ENCODE measurements at regions of chr10 and their contacts with region 1.

Region 1: GRCh38 chr10:74151056-74151878 is at the start of gene ADK:
- DNase-seq: peak; percentile 99
- ATAC-seq: peak; percentile 96
- H3K4me3 Mint-ChIP-seq: no peak within 1 kb of the TSS
- H3K27ac Mint-ChIP-seq: no peak within 1 kb of the TSS
- H3K4me1 Mint-ChIP-seq: peaks cover 61% of the 10 kb centered on the region
- H3K27me3 Mint-ChIP-seq: no peaks in the 10 kb centered on the region
- CTCF ChIP-seq: no peak
- total RNA-seq, gene ADK: 46.1 and 47.5 TPM in 2 replicates

Region 2: GRCh38 chr10:73997787-73998622 is 153.3 kb before region 1 on chr10 and contains the start of gene VCL:
- CTCF ChIA-PET with region 1: no interaction called
- POLR2A ChIA-PET with region 1: interaction called, 3 read pairs
- intact Hi-C with region 1: loop called (anchors 1 kb)
- DNase-seq: peak; percentile 91
- ATAC-seq: peak; percentile 97
- H3K4me3 Mint-ChIP-seq: peak within 1 kb of the TSS; percentile 96
- H3K27ac Mint-ChIP-seq: peak within 1 kb of the TSS; percentile 95
- H3K4me1 Mint-ChIP-seq: peaks cover 45% of the 10 kb centered on the region
- H3K27me3 Mint-ChIP-seq: no peaks in the 10 kb centered on the region
- CTCF ChIP-seq: no peak
- total RNA-seq, gene VCL: 21.3 and 25.8 TPM in 2 replicates

Region 3: GRCh38 chr10:74165530-74165901 is 14.2 kb after region 1 on chr10:
- CTCF ChIA-PET with region 1: no interaction called
- POLR2A ChIA-PET with region 1: interaction called, 57 read pairs
- intact Hi-C with region 1: loop called (anchors 1 kb)
- DNase-seq: no peak
- ATAC-seq: no peak
- H3K4me3 Mint-ChIP-seq: peak overlapping the region; percentile 24
- H3K27ac Mint-ChIP-seq: peak overlapping the region; percentile 83
- H3K4me1 Mint-ChIP-seq: peaks cover 81% of the 10 kb centered on the region
- H3K27me3 Mint-ChIP-seq: no peaks in the 10 kb centered on the region
- CTCF ChIP-seq: no peak

Region 4: GRCh38 chr10:74189999-74190421 is 38.7 kb after region 1 on chr10:
- CTCF ChIA-PET with region 1: interaction called, 3 read pairs
- POLR2A ChIA-PET with region 1: interaction called, 20 read pairs
- intact Hi-C with region 1: loop called (anchors 1 kb)
- DNase-seq: no peak
- ATAC-seq: peak; percentile 97
- H3K4me3 Mint-ChIP-seq: peak overlapping the region; percentile 67
- H3K27ac Mint-ChIP-seq: peak overlapping the region; percentile 92
- H3K4me1 Mint-ChIP-seq: peaks cover 81% of the 10 kb centered on the region
- H3K27me3 Mint-ChIP-seq: no peaks in the 10 kb centered on the region
- CTCF ChIP-seq: no peak

Region 5: DNA sequence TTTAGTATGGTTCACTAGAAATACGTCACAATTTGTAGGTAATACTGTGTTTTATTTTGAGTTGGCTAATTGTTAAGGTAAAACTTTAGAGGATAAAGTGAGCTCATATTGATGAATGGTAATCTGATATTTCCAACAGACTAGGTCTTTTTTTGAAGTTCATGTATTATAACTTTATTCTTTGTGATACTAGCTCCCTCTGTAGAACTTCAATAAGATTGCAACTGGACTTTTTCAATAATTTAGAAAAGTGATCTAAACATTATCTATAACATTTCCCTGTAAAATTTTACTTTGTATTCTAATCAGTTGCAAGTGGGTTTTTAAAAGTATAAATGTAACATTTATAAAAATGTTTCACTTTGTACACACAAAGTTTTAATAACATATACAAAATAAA is 83.3 kb after region 1 on chr10:
- CTCF ChIA-PET with region 1: interaction called, 12 read pairs
- POLR2A ChIA-PET with region 1: interaction called, 5 read pairs
- intact Hi-C with region 1: loop called (anchors 1 kb)
- DNase-seq: no peak
- ATAC-seq: no peak
- H3K4me3 Mint-ChIP-seq: no peak overlapping the region
- H3K27ac Mint-ChIP-seq: no peak overlapping the region
- H3K4me1 Mint-ChIP-seq: peaks cover 16% of the 10 kb centered on the region
- H3K27me3 Mint-ChIP-seq: no peaks in the 10 kb centered on the region
- CTCF ChIP-seq: no peak

Measured in activated B cell treated with CpG ODN at 0.5 μM for 24 hours (primary cell).